Activated CD4-positive, alpha-beta memory T cell treated with anti-CD3 and anti-CD28 coated beads, Interleukin-2, amount 10 ng/mL, durations not matched to agents 7 days and 5 days (primary cell): ENCODE measurements at regions of chr14 and their contacts with region 1.

Region 1: DNA sequence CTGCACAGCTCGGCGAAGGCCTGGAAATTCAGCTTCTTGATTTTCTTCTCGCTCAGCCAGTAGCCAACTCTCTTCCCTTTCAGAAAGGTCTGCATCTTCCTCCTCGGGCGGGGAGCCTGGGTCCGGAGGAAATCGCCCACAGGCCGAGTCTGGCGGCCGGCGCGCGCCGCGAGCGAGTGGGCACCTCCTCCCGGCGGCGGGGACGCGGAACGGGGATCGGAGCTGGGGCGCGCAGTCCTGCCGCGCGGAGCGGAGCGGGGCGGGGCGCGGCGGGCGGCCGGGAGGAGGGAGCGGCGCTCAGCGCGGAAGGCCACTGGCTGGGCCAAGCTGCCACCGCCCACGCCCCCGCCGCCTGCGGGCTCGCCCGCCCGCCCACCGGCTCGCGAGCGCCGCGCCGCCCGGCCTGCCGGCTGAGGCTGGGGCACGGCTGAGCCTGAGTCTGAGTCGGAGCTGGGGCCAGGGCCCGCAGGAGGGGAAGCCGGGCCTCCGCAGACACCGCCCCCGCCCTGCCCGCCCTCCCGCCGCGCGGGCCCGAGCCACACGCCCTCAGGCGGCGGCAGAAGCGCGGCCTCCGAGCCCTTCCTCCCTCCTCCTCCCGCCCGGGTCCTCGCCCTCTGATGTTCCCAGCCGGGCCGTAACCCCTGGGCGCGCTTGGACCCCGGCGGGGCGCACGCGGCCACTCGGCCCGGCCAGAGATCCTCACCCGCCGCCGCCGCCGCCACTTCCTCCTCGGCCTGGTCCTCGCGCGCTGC is 480 bp downstream of the ITPK1 start:
- DNase-seq: peak; percentile 89
- H3K4me3 Mint-ChIP-seq: peak overlapping the region; percentile 86
- H3K27ac Mint-ChIP-seq: peak overlapping the region; percentile 72
- H3K4me1 Mint-ChIP-seq: peaks cover 30% of the 10 kb centered on the region
- H3K27me3 Mint-ChIP-seq: no peaks in the 10 kb centered on the region

Region 2: GRCh38 chr14:93012951-93013719 is 102.1 kb before region 1 on chr14:
- CTCF ChIA-PET with region 1: no interaction called
- POLR2A ChIA-PET with region 1: no interaction called
- DNase-seq: no peak
- H3K4me3 Mint-ChIP-seq: no peak overlapping the region
- H3K27ac Mint-ChIP-seq: no peak overlapping the region
- H3K4me1 Mint-ChIP-seq: peaks cover 17% of the 10 kb centered on the region
- H3K27me3 Mint-ChIP-seq: no peaks in the 10 kb centered on the region

Region 3: DNA sequence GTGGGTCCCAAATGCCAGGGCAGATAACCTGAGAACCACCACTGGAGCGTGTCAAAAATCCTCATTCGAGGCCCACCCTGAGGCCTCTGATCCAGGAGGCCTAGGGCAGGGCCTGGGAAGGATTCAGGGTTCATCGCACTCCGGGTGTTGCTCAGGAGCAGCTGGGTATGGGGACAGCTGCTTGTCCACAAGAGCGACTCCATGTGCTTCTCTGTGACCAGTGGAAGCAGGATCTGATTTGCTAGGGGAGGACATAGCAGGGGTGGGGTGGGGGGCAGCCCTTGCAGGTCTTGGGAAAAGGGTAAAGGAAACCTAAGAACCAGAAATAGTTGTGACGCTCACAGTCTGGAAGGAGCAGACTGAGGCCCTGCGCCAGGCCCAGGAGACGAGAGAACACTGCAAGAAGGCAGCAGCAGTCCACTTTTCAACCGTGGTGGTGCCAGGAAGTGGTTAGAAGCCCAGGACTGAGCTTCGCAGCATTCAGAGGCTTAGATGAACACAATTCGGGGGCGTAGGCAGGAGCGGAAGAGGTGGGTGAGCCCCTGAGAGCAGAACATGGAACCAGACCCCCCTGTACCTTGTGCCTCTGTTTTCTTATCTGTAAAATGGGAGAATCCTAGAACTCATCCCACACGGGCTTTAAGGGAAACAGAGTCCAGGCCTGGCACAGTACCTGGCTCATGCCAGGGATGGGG is 33.2 kb before region 1 on chr14:
- CTCF ChIA-PET with region 1: interaction called, 14 read pairs
- POLR2A ChIA-PET with region 1: no interaction called
- DNase-seq: no peak
- H3K4me3 Mint-ChIP-seq: no peak overlapping the region
- H3K27ac Mint-ChIP-seq: peak overlapping the region; percentile 4
- H3K4me1 Mint-ChIP-seq: peaks cover 31% of the 10 kb centered on the region
- H3K27me3 Mint-ChIP-seq: no peaks in the 10 kb centered on the region

Region 4: GRCh38 chr14:93103392-93104080 is 11.7 kb before region 1 on chr14:
- CTCF ChIA-PET with region 1: interaction called, 99 read pairs
- POLR2A ChIA-PET with region 1: interaction called, 61 read pairs
- DNase-seq: peak; percentile 89
- H3K4me3 Mint-ChIP-seq: peak overlapping the region; percentile 78
- H3K27ac Mint-ChIP-seq: peak overlapping the region; percentile 96
- H3K4me1 Mint-ChIP-seq: peaks cover 55% of the 10 kb centered on the region
- H3K27me3 Mint-ChIP-seq: no peaks in the 10 kb centered on the region

Region 5: DNA sequence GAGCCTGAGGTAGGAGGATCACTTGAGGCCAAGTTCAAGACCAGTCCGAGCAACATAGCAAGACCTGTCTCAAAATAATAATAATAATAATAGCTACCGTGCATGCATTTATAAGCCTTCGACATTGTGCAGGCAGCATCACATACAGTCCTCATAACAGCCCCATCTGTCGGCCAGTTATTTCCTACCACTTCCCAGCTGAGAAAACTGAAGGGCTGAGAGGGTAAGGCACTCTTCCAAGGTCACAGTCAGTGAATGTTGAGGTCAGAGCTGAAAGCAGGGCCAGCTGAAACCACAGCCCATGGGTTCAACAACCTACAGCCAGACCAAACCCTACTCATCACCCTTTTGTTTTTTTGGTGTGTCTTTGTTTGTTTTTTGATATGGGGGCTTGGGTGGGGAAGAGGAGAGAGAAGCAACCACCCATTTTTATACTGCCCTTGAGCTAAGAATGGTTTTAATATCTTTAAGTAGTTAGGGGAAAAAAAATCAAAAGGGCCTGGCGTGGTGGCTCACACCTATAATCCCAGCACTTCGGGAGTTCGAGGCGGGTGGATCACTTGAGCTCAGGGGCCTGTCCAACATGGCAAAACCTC is 17.3 kb after region 1 on chr14:
- CTCF ChIA-PET with region 1: interaction called, 53 read pairs
- POLR2A ChIA-PET with region 1: interaction called, 11 read pairs
- DNase-seq: peak; percentile 32
- H3K4me3 Mint-ChIP-seq: no peak overlapping the region
- H3K27ac Mint-ChIP-seq: no peak overlapping the region
- H3K4me1 Mint-ChIP-seq: no peaks in the 10 kb centered on the region
- H3K27me3 Mint-ChIP-seq: peaks cover 7% of the 10 kb centered on the region

Region 6: DNA sequence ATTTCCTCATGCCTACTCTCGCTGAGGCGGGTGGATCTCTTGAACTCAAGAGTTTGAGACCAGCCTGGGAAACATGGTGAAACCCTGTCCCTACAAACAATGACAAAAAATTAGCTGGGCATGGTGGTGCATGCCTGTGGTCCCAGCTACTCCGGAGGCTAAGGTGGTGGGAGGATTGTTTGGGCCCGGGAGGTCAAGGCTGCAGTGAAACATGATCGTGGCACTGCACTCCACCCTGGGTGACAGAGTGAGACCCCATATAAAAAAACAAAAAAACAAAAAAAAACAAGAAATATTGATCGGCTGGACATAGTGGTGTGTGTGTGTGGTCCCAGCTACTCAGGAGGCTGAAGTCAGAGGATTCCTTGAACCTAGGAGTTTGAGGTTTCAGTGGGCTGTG is 60.2 kb after region 1 on chr14:
- CTCF ChIA-PET with region 1: interaction called, 35 read pairs
- POLR2A ChIA-PET with region 1: interaction called, 3 read pairs
- DNase-seq: no peak
- H3K4me3 Mint-ChIP-seq: no peak overlapping the region
- H3K27ac Mint-ChIP-seq: no peak overlapping the region
- H3K4me1 Mint-ChIP-seq: peaks cover 9% of the 10 kb centered on the region
- H3K27me3 Mint-ChIP-seq: peaks cover 1% of the 10 kb centered on the region

Region 7: DNA sequence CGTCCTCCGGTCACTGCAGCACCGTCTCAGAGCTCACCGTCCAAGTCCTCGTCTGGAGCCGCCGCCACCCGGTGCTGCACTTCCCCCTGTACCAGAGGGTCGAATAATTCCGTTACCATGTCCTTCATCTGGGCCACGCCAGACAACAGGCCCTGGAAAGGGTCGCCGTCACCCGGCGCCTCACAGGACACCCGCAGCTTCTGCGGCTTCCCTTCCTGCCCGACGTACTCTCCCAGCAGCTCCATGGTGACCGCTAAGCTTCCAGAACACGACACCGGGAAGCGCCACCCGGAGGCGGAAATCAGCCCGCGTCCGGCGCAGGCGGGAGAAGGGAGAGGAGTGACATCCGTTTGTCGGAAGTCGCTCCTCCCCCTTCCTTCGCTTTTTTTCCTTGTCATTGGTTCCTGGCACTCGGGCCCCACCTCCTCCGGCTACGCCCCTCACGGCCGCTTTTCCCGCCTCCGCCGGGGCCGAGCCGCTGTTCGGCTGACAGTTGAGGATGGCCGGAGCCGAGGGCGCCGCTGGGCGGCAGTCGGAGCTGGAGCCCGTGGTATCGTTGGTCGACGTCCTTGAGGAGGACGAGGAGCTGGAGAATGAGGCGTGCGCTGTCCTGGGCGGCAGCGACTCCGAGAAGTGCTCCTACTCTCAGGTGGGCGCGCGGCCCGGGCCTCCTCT is 91.7 kb after region 1 on chr14 and contains the starts of genes GON7 and UBR7:
- CTCF ChIA-PET with region 1: interaction called, 18 read pairs
- POLR2A ChIA-PET with region 1: interaction called, 15 read pairs
- DNase-seq: peak; percentile 92
- H3K4me3 Mint-ChIP-seq: peak within 1 kb of the TSS; percentile 78
- H3K27ac Mint-ChIP-seq: peak within 1 kb of the TSS; percentile 90
- H3K4me1 Mint-ChIP-seq: peaks cover 49% of the 10 kb centered on the region
- H3K27me3 Mint-ChIP-seq: no peaks in the 10 kb centered on the region
- total RNA-seq, gene GON7: 16.0 to 18.2 TPM
- total RNA-seq, gene UBR7: 43.5 to 47.7 TPM